GM12878 (cell line): ENCODE measurements at regions of chr6 and their contacts with region 1.

Region 1: DNA sequence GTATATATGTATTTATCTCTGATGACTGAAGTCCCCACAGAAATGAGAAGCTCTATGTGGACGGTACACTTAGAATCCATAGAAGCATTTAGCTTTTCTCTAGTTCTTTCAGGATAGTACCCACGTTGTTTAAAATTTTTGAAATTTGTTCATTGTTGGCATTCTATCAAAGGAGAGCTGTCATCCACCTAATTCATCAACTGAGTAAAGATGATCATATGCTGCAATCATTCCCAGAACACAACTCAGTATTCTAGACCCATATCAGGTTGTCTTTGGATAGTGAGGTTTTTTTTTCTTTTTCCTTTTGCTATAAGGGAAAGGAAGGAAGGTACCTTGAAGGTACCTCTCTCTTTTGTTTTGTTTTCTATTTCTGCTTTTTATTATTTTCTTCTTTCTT is 9.3 kb downstream of the SERAC1 start:
- DNase-seq: no peak
- ATAC-seq: no peak
- H3K4me3 ChIP-seq: no peak overlapping the region
- H3K27ac ChIP-seq: no peak overlapping the region
- H3K4me1 ChIP-seq: no peaks in the 10 kb centered on the region
- H3K27me3 ChIP-seq: no peaks in the 10 kb centered on the region
- CTCF ChIP-seq: no peak
- EP300 ChIP-seq: no peak
- POLR2A ChIP-seq: no peak
- RAD21 ChIP-seq: no peak

Region 2: GRCh38 chr6:158143700-158144099 is 15.0 kb before region 1 on chr6:
- CTCF ChIA-PET with region 1: interaction called, 16 read pairs
- POLR2A ChIA-PET with region 1: no interaction called
- RAD21 ChIA-PET with region 1: interaction called, 4 read pairs
- SMC1A ChIA-PET with region 1: interaction called, 3 read pairs
- in situ Hi-C with region 1: no loop called
- intact Hi-C with region 1: no loop called
- DNase-seq: no peak
- ATAC-seq: peak; percentile 63
- H3K4me3 ChIP-seq: no peak overlapping the region
- H3K27ac ChIP-seq: no peak overlapping the region
- H3K4me1 ChIP-seq: no peaks in the 10 kb centered on the region
- H3K27me3 ChIP-seq: no peaks in the 10 kb centered on the region
- CTCF ChIP-seq: peak; percentile 32 to 36 (median 36); a peak in 3 of 6 replicates
- EP300 ChIP-seq: no peak
- POLR2A ChIP-seq: no peak
- RAD21 ChIP-seq: no peak